IMR-90 (cell line): ENCODE measurements at regions of chr18 and their contacts with region 1.

Region 1: DNA sequence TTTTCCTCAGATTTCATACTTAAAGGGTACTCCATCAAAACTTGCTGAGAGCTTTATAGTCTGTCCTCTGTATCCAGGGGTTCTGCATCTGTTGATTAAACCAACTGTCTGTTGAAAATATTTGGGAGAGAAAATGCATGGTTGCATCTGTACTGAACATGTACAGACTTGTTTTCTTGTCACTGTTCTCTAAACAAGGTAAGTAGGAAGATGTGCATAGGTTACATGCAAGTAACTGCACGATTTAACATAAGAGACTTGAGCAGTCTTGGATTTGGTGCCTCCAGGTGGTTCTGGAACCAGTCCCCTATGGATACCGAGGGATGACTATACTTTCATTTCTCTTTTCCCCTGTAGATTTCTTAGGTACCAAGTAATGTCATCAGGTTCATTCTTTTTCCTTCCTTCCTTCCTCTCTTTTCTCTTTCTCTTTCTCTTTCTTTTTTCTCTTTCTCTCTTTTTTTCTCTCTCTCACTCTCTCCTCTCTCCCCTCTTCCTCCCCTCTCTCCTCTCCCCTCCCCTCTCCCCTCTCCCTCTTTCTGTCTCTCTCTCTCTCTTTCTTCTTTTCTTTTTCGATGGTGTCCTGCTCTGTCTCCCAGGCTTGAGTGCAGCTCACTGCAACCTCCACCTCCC is 23.2 kb downstream of the ADNP2 start:
- DNase-seq: no peak
- ATAC-seq: no peak
- H3K4me3 ChIP-seq: no peak overlapping the region
- H3K27ac ChIP-seq: peak overlapping the region; percentile 66; the same call in 1 of the 2 replicates
- H3K4me1 ChIP-seq: peaks cover 2% of the 10 kb centered on the region; the same call in 1 of the 2 replicates
- H3K27me3 ChIP-seq: no peaks in the 10 kb centered on the region
- CTCF ChIP-seq: no peak
- POLR2A ChIP-seq: no peak
- RAD21 ChIP-seq: no peak

Region 2: DNA sequence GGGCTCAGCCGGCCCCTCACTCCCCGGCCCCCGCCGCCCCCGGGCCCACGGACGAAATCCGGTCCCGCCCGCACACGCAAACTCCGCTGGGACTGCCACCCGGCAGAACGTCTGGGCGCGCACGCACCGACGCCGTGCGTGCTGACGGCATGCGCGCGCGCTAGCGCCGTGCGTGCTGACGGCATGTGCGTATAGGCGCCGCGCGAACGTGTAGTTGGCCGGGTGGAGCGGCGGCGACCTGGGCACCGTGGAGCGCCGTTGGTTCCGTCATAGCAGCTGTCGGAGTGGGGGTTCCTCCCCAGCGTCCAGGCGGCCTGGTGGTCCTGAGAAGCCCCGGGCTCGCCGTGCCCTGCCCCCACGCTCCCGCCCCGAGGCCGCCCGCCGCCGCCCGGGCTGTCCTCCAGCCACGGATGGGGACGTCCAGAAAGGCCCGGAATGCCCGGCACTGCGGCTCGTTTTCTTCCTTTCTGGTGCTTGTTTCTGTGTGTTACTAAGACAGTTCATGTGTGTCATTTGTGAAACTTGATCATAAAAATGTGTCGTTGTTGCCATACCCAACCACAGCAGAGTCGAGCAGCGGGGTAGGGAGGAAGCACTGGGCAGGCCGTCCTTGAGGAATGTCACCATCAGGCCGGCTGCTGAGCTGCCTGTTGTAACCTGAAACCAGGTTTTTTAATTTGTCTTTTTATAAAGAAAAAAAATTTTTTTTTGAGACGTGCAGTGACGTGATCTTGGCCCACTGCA is 143.7 kb before region 1 on chr18 and contains the start of gene TXNL4A:
- CTCF ChIA-PET with region 1: no interaction called
- POLR2A ChIA-PET with region 1: no interaction called
- dilution Hi-C with region 1: no loop called
- in situ Hi-C with region 1: no loop called
- intact Hi-C with region 1: loop called (anchors 5 kb)
- DNase-seq: peak; percentile 89
- ATAC-seq: peak; percentile 95
- H3K4me3 ChIP-seq: peak within 1 kb of the TSS; percentile 85
- H3K27ac ChIP-seq: peak within 1 kb of the TSS; percentile 94
- H3K4me1 ChIP-seq: peaks cover 7% of the 10 kb centered on the region
- H3K27me3 ChIP-seq: no peaks in the 10 kb centered on the region
- CTCF ChIP-seq: no peak
- POLR2A ChIP-seq: peak; percentile 77
- RAD21 ChIP-seq: no peak
- total RNA-seq, gene TXNL4A: 38.7 and 72.8 TPM in 2 replicates